ENCODE measurements at regions of chr17 and their contacts with region 1.

Region 1: DNA sequence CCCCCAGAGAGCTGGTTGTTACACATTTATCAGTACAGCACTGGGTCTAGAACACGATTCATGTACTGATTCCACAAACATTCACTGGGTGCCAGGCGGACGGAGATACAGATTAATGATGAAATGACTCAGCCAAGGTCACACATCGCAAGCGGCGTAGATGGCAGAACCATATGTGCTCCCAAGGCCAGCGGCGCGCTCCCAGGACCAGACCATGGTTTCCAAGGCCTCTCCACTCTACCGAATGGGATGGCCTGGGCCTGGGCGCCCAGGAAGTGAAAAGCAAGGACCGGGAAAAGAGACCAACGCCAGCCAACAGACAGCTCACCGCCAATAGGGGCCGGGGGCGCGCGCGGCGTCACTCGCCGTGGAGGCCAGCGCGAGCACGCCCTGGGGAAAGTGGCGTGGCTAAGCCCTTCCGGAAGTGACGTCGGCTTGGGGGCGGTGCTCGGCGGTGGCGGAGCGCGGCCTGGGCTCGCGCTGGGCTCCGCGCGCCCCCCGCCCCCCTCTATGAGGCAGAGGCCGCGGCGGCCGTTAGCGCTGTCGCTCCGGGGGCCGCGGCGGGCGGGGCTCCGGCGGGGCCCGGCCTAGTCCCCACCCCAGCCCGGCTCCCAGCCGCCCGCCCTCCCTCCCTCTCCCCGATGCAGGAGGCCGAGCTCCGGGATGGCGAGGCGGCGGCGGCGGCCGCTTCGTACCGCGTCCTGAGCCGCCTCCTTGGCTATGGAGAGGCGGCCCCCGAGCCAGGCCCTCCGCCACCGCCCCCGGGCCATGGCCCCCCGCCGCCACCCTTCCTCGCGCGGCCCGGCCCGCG is at the start of gene SOCS7:
- DNase-seq: peak; percentile 92
- ATAC-seq: peak; percentile 83
- H3K4me3 Mint-ChIP-seq: peak within 1 kb of the TSS; percentile 89
- H3K27ac Mint-ChIP-seq: peak within 1 kb of the TSS; percentile 96
- H3K4me1 Mint-ChIP-seq: peaks cover 36% of the 10 kb centered on the region
- H3K27me3 Mint-ChIP-seq: no peaks in the 10 kb centered on the region
- total RNA-seq, gene SOCS7: 13.0 to 15.3 TPM

Region 2: GRCh38 chr17:38333635-38334295 is 17.9 kb before region 1 on chr17:
- CTCF ChIA-PET with region 1: interaction called, 33 read pairs
- POLR2A ChIA-PET with region 1: no interaction called
- DNase-seq: peak; percentile 66
- ATAC-seq: peak; percentile 71
- H3K4me3 Mint-ChIP-seq: no peak overlapping the region
- H3K27ac Mint-ChIP-seq: no peak overlapping the region
- H3K4me1 Mint-ChIP-seq: no peaks in the 10 kb centered on the region
- H3K27me3 Mint-ChIP-seq: no peaks in the 10 kb centered on the region

Region 3: GRCh38 chr17:38364741-38365140 is 13.1 kb after region 1 on chr17:
- CTCF ChIA-PET with region 1: interaction called, 46 read pairs
- POLR2A ChIA-PET with region 1: interaction called, 3 read pairs
- DNase-seq: no peak
- ATAC-seq: no peak
- H3K4me3 Mint-ChIP-seq: no peak overlapping the region
- H3K27ac Mint-ChIP-seq: no peak overlapping the region
- H3K4me1 Mint-ChIP-seq: peaks cover 4% of the 10 kb centered on the region
- H3K27me3 Mint-ChIP-seq: no peaks in the 10 kb centered on the region

Region 4: GRCh38 chr17:38397227-38397626 is 45.6 kb after region 1 on chr17:
- CTCF ChIA-PET with region 1: interaction called, 16 read pairs
- POLR2A ChIA-PET with region 1: no interaction called
- DNase-seq: no peak
- ATAC-seq: no peak
- H3K4me3 Mint-ChIP-seq: no peak overlapping the region
- H3K27ac Mint-ChIP-seq: no peak overlapping the region
- H3K4me1 Mint-ChIP-seq: peaks cover 5% of the 10 kb centered on the region
- H3K27me3 Mint-ChIP-seq: no peaks in the 10 kb centered on the region

Region 5: GRCh38 chr17:38415250-38416194 is 63.9 kb after region 1 on chr17:
- CTCF ChIA-PET with region 1: interaction called, 160 read pairs
- POLR2A ChIA-PET with region 1: interaction called, 4 read pairs
- DNase-seq: peak; percentile 36
- ATAC-seq: peak; percentile 41
- H3K4me3 Mint-ChIP-seq: peak overlapping the region; percentile 56
- H3K27ac Mint-ChIP-seq: peak overlapping the region; percentile 83
- H3K4me1 Mint-ChIP-seq: peaks cover 20% of the 10 kb centered on the region
- H3K27me3 Mint-ChIP-seq: peaks cover 27% of the 10 kb centered on the region

Region 6: GRCh38 chr17:38464723-38465390 is 113.2 kb after region 1 on chr17:
- CTCF ChIA-PET with region 1: no interaction called
- POLR2A ChIA-PET with region 1: no interaction called
- DNase-seq: no peak
- ATAC-seq: no peak
- H3K4me3 Mint-ChIP-seq: no peak overlapping the region
- H3K27ac Mint-ChIP-seq: no peak overlapping the region
- H3K4me1 Mint-ChIP-seq: no peaks in the 10 kb centered on the region
- H3K27me3 Mint-ChIP-seq: peaks cover 3% of the 10 kb centered on the region

Region 7: DNA sequence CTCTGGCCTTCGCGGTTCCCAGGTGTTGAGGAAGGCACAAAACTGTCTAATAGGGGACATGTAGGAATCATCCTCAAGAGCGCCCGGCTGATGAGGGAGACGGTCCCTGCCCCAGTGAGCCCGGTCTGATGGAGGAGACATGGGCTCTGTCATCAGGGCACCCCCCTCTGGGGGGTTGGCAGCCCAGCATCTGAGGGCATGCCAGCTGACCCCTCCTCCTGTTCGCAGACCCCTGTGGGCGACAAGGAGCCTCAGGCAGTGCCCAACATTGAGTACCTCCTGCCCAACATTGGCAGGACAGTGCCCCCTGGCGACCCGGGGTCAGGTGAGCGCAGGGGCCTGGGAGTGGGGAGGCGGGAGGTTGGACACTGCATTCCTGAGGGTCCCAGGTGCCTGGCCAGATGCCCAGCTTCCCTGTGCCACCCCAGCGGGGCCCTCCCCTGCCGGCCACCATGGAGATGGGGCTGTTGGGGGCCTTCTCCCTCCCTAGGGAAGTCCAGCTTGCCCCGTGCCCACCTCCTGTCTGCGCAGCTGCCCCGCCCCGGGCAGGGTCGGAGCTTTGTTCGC is 146.7 kb after region 1 on chr17:
- CTCF ChIA-PET with region 1: no interaction called
- POLR2A ChIA-PET with region 1: no interaction called
- DNase-seq: no peak
- ATAC-seq: no peak
- H3K4me3 Mint-ChIP-seq: no peak overlapping the region
- H3K27ac Mint-ChIP-seq: no peak overlapping the region
- H3K4me1 Mint-ChIP-seq: peaks cover 5% of the 10 kb centered on the region
- H3K27me3 Mint-ChIP-seq: no peaks in the 10 kb centered on the region

Region 8: GRCh38 chr17:38557836-38558727 is 206.5 kb after region 1 on chr17:
- CTCF ChIA-PET with region 1: interaction called, 13 read pairs
- POLR2A ChIA-PET with region 1: no interaction called
- DNase-seq: peak; percentile 93
- ATAC-seq: peak; percentile 86
- H3K4me3 Mint-ChIP-seq: peak overlapping the region; percentile 79
- H3K27ac Mint-ChIP-seq: no peak overlapping the region
- H3K4me1 Mint-ChIP-seq: peaks cover 30% of the 10 kb centered on the region
- H3K27me3 Mint-ChIP-seq: peaks cover 44% of the 10 kb centered on the region

Measured in activated CD8-positive, alpha-beta T cell treated with anti-CD3 and anti-CD28 coated beads, Interleukin-2, amount 10 ng/mL, durations not matched to agents 7 days and 5 days (primary cell).